ENCODE measurements at regions of chr15 and their contacts with region 1.

Region 1: DNA sequence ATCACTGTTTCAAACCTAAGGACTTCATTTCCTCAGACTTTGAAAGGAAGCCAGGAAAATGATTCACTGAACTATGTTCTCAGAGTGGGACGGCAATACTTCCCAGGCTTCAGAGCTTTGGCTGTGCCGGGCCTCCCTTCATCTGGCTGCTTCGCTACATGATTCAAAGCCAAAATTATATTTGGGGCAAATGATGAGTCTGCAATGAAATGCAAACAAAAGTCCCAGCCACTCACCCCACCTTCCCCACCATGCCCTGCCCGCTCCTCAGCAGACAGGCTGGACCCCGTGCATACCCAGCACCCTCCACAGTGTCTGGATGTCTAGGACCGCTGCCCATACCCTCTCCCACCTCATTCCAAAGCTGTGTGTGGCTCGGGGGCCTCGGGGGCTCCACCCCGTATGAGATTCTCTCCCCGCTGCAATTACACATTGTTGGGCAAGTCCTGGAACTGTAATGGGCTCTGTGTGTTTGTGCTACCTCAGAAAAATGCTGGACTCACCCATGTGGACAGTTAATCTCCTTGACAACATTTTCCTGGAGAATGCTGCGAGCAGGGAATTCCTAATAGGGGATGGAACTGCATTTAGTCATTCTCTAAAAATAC is 32.2 kb downstream of the ATP10A start:
- DNase-seq: no peak
- ATAC-seq: no peak
- H3K4me3 Mint-ChIP-seq: no peak overlapping the region
- H3K27ac Mint-ChIP-seq: no peak overlapping the region
- H3K4me1 Mint-ChIP-seq: peaks cover 38% of the 10 kb centered on the region
- H3K27me3 Mint-ChIP-seq: no peaks in the 10 kb centered on the region

Region 2: GRCh38 chr15:25661898-25662297 is 169.1 kb before region 1 on chr15:
- CTCF ChIA-PET with region 1: no interaction called
- POLR2A ChIA-PET with region 1: no interaction called
- intact Hi-C with region 1: no loop called
- DNase-seq: no peak
- ATAC-seq: no peak
- H3K4me3 Mint-ChIP-seq: no peak overlapping the region
- H3K27ac Mint-ChIP-seq: no peak overlapping the region
- H3K4me1 Mint-ChIP-seq: no peaks in the 10 kb centered on the region
- H3K27me3 Mint-ChIP-seq: peaks cover 21% of the 10 kb centered on the region

Region 3: DNA sequence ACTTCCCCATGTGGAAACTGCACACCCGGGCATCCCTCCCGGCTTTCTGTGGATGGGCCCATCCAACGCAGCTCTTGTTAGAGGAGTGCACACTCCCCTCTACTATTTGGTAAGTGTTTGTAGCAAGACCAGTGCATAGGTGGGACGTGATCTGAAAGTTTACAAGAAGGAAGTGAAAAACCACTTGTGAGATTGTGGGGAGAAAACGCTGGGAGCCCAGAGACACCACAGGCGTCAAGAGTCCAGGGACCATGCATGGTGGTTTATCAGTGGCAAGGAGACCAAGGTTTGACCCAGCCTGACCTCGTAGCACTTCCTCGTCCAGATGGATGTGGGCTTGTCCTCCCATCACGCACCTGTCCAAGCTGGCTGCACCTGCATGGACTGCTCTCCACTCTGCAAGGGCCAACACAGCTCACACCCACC is 19.5 kb before region 1 on chr15:
- CTCF ChIA-PET with region 1: interaction called, 3 read pairs
- POLR2A ChIA-PET with region 1: no interaction called
- intact Hi-C with region 1: loop called in 1 of 2 experiments (anchors 2 kb)
- DNase-seq: no peak
- ATAC-seq: peak; percentile 30
- H3K4me3 Mint-ChIP-seq: peak overlapping the region; percentile 16
- H3K27ac Mint-ChIP-seq: peak overlapping the region; percentile 81
- H3K4me1 Mint-ChIP-seq: peaks cover 62% of the 10 kb centered on the region
- H3K27me3 Mint-ChIP-seq: no peaks in the 10 kb centered on the region

Measured in activated CD4-positive, alpha-beta T cell treated with anti-CD3 and anti-CD28 coated beads for 36 hours (primary cell).